Cardiac septum (tissue), 1 donor: ENCODE measurements at regions of chr12 and their contacts with region 1.

Region 1: DNA sequence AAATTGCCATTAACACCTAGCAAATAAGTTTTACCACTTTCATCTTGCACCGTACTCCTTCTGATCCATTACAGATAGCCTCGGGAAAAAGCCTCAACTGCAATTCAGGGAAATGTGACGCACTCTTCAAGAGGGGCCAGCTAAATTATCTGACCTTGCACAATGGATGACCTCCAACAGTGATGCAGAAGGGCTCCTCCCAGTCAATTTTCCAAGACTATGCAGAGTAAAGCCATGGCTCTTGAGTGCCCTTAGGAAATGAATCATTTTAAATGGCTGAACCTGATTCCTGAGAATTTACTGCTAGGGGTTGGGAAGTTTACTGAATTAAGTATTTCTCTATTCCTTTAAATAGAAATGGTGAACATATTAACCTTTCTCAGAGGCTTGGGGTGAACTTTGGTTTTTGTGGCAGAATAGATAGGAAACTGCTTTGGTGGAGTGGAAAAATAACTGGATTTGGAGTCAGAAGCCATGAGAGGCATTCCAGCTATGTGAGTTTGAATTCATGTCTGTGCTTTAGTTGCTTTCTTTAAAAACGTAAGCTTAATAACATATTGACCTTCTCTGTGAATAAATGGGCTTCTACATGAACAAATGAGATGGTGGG is 64.8 kb upstream of the OVCH1 start:
- DNase-seq: no peak

Region 2: GRCh38 chr12:29534935-29535334 is 27.3 kb before region 1 on chr12:
- intact Hi-C with region 1: no loop called
- DNase-seq: no peak

Region 3: DNA sequence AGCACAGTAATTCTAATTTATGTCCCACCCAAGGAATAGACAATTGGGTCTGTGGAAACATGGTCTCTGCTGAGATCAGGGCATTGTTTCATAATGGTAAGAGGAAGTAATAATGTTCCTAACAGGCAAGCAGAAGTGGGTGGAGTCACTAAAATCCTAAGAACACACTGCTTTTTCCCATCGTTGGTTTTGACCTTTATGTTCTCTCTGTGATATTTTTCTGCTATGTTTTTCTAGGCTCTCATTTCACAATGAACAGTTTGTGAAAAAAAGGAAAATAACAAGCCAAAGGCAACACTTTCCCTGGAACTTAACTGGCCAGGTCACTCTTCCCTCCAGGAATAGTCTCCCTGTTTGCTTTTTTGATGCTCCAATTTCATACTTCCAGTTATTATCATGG is 15.8 kb after region 1 on chr12:
- intact Hi-C with region 1: loop called (anchors 2 kb)
- DNase-seq: no peak

Region 4: DNA sequence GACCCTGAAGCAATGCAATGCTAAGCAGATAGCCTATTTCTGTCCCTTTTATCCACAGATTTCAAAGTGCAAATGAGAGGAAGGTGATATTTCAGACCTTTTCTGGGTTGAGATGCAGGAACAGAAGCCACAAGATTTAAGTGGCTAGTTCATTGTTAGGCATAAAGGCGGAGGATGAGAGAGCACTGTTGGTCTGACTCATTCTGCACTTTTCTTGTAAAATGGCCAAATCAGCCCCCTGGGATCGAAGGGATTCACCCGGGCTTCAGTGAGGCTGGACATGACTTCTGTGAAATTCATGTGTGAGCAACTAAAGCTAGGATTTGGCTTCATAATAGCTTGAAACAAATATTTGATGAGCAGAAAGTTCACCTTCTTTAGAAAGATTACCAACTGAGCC is 37.1 kb after region 1 on chr12:
- intact Hi-C with region 1: no loop called
- DNase-seq: no peak

Region 5: GRCh38 chr12:29691141-29691854 is 129.0 kb after region 1 on chr12:
- intact Hi-C with region 1: no loop called
- DNase-seq: no peak

Region 6: GRCh38 chr12:29725587-29726320 is 163.5 kb after region 1 on chr12:
- intact Hi-C with region 1: loop called (anchors 10 kb)
- DNase-seq: peak; percentile 81